ENCODE measurements at regions of chr15 and their contacts with region 1.

Region 1: DNA sequence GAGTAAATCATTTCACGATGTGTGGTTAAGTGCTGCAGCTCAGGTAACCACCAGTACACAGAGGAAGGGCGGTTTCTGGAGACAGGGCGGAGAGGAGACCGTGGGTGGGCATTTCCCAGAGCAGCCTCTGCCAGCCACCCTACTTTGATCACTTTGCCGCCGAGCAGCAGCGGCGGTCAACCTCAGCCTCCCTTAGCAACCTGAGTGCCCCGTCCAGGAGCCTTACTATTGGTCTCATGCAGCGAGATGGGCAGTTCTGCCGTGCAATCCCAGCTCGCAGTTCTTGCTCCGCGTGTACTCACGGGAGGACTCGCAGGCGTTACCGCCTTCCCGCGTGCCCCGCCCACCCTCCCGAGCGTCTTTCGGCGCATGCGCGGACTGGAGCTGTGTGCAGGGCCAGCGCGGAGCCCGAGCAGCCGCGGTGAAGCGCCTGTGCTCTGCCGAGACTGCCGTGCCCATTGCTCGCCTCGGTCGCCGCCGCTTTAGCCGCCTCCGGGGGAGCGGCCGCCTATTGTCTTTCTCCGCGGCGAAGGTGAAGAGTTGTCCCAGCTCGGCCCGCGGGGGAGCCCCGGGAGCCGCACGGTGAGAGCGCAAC is at the start of gene AKAP13:
- DNase-seq: peak; percentile 80
- ATAC-seq: peak; percentile 81
- H3K4me3 Mint-ChIP-seq: peak within 1 kb of the TSS; percentile 93
- H3K27ac Mint-ChIP-seq: peak within 1 kb of the TSS; percentile 94
- H3K4me1 Mint-ChIP-seq: peaks cover 42% of the 10 kb centered on the region
- H3K27me3 Mint-ChIP-seq: no peaks in the 10 kb centered on the region
- CTCF ChIP-seq: no peak
- total RNA-seq, gene AKAP13: 254 and 290 TPM in 2 replicates

Region 2: GRCh38 chr15:85296615-85297402 is 83.5 kb before region 1 on chr15:
- CTCF ChIA-PET with region 1: interaction called, 9 read pairs
- POLR2A ChIA-PET with region 1: interaction called, 7 read pairs
- intact Hi-C with region 1: loop called (anchors 1 kb)
- DNase-seq: peak; percentile 40
- ATAC-seq: peak; percentile 99
- H3K4me3 Mint-ChIP-seq: peak overlapping the region; percentile 76
- H3K27ac Mint-ChIP-seq: peak overlapping the region; percentile 48
- H3K4me1 Mint-ChIP-seq: peaks cover 23% of the 10 kb centered on the region
- H3K27me3 Mint-ChIP-seq: no peaks in the 10 kb centered on the region
- CTCF ChIP-seq: peak; percentile 80

Region 3: GRCh38 chr15:85318048-85318731 is 62.1 kb before region 1 on chr15:
- CTCF ChIA-PET with region 1: interaction called, 4 read pairs
- POLR2A ChIA-PET with region 1: interaction called, 51 read pairs
- intact Hi-C with region 1: loop called (anchors 1 kb)
- DNase-seq: no peak
- ATAC-seq: peak; percentile 87
- H3K4me3 Mint-ChIP-seq: peak overlapping the region; percentile 69
- H3K27ac Mint-ChIP-seq: peak overlapping the region; percentile 87
- H3K4me1 Mint-ChIP-seq: peaks cover 74% of the 10 kb centered on the region
- H3K27me3 Mint-ChIP-seq: no peaks in the 10 kb centered on the region
- CTCF ChIP-seq: no peak

Region 4: DNA sequence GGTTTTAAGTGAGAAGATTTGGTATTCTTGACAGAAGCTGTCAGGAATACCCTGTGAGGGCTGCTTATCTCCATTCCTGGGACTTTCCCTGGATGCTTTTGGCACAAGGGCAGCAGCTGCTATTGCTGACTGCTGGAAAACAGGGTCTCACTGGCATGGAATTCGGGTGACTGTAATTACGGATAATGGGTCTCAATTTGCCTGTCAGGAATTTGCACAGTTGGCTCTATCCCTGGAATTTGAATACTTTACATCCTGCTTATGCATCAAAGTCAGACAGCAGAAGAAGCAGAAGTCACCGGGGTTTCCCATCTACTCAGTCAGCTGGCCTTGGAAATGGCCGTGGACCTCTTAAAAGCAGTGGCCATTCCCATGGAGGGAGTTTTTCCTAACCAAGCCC is 25.9 kb before region 1 on chr15:
- CTCF ChIA-PET with region 1: no interaction called
- POLR2A ChIA-PET with region 1: no interaction called
- intact Hi-C with region 1: no loop called
- DNase-seq: no peak
- ATAC-seq: no peak
- H3K4me3 Mint-ChIP-seq: no peak overlapping the region
- H3K27ac Mint-ChIP-seq: no peak overlapping the region
- H3K4me1 Mint-ChIP-seq: peaks cover 8% of the 10 kb centered on the region
- H3K27me3 Mint-ChIP-seq: no peaks in the 10 kb centered on the region
- CTCF ChIP-seq: no peak

Region 5: DNA sequence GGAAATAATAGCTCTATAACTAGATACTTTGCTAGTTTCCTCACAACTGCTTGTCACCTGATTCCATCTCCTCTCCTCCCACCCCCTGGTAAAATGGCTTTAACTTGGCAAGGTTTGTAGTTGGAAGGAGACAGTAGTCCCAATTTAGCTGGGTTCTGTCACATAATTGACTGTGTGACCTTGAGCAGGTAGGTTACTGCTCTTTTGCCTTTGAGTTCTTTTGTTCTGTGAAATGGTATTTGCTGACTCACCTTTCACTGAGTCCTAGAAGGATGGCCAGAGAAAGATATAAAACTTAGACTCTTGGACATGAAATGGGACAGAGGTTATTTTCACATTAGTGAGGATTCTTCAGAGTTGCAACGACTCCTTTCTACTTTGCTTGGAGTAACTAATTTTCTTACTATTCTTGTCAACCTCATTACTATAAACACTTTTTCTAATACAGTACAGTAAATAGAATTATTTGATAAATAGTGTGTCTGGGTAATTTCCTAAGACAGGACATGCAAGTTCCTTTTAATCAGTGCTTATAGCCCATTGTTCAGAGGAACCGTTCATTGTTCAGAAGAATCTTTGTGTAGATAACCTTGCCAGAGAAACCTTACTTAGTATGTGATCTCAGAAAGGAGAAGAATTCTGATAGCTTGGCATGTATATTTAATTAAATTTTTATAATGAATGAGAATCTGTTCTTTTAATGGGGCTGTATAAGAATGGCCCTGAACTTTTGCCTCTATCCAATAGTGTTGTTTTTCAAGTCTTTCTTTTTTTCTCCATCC is 14.4 kb after region 1 on chr15:
- CTCF ChIA-PET with region 1: interaction called, 3 read pairs
- POLR2A ChIA-PET with region 1: interaction called, 395 read pairs
- intact Hi-C with region 1: loop called (anchors 1 kb)
- DNase-seq: no peak
- ATAC-seq: no peak
- H3K4me3 Mint-ChIP-seq: no peak overlapping the region
- H3K27ac Mint-ChIP-seq: no peak overlapping the region
- H3K4me1 Mint-ChIP-seq: peaks cover 61% of the 10 kb centered on the region
- H3K27me3 Mint-ChIP-seq: no peaks in the 10 kb centered on the region
- CTCF ChIP-seq: no peak

Region 6: DNA sequence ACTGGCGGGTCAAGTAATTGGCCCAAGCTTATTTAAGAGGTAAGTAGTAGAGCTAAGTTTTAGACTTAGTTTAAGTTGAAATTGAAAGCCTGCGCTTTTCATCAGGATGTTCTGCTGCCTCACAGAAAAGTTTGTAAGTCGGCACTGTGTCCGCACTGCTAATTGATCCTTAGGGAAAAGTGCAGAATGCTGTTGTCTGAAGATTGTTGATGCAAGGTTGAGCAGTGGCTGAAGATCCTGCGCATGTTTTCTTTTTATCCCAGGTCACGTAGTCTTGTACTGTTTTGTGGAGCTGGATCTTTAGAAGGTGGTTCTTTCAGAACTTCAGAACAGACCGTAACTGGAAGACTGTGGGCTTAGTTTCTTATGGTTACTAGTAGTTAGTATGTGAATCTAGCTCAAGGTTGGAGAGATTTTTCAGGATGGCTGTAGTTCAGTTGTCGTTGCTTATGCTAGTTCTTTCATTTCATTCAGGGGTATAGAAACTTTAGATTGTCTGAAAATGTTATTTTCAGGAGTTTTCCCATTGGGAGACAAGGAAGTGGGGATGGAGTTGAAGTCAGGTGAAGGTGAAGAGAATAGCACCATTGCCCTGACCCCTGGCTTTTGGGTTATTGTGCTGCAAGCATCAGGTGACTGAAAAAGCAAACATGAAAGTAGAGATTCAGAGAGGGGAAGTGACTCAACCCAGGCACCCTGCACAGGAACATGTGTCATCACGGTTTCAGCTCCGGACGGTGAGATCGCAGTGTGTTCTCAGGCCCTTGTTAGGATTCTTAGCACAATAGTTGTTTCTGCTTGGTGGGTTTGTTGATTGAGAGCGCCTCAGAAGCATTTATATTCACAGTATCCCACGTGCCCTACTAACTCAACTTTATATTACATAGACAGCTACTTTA is 32.9 kb after region 1 on chr15:
- CTCF ChIA-PET with region 1: interaction called, 11 read pairs
- POLR2A ChIA-PET with region 1: interaction called, 395 read pairs
- intact Hi-C with region 1: loop called (anchors 1 kb)
- DNase-seq: peak; percentile 50
- ATAC-seq: peak; percentile 94
- H3K4me3 Mint-ChIP-seq: peak overlapping the region; percentile 48
- H3K27ac Mint-ChIP-seq: peak overlapping the region; percentile 87
- H3K4me1 Mint-ChIP-seq: peaks cover 73% of the 10 kb centered on the region
- H3K27me3 Mint-ChIP-seq: no peaks in the 10 kb centered on the region
- CTCF ChIP-seq: no peak

Region 7: GRCh38 chr15:85456798-85457197 is 76.5 kb after region 1 on chr15:
- CTCF ChIA-PET with region 1: no interaction called
- POLR2A ChIA-PET with region 1: interaction called, 12 read pairs
- intact Hi-C with region 1: no loop called
- DNase-seq: no peak
- ATAC-seq: peak; percentile 69
- H3K4me3 Mint-ChIP-seq: no peak overlapping the region
- H3K27ac Mint-ChIP-seq: peak overlapping the region; percentile 88
- H3K4me1 Mint-ChIP-seq: peaks cover 90% of the 10 kb centered on the region
- H3K27me3 Mint-ChIP-seq: no peaks in the 10 kb centered on the region
- CTCF ChIP-seq: no peak

Measured in activated B cell treated with CpG ODN at 0.5 μM for 24 hours (primary cell).